AG04449 (cell line): ENCODE measurements at regions of chr19 and their contacts with region 1.

Region 1: GRCh38 chr19:39341719-39342604 is at the start of gene SAMD4B:
- DNase-seq: peak; percentile 72
- H3K4me3 ChIP-seq: peak within 1 kb of the TSS; percentile 90
- CTCF ChIP-seq: peak; percentile 88

Region 2: DNA sequence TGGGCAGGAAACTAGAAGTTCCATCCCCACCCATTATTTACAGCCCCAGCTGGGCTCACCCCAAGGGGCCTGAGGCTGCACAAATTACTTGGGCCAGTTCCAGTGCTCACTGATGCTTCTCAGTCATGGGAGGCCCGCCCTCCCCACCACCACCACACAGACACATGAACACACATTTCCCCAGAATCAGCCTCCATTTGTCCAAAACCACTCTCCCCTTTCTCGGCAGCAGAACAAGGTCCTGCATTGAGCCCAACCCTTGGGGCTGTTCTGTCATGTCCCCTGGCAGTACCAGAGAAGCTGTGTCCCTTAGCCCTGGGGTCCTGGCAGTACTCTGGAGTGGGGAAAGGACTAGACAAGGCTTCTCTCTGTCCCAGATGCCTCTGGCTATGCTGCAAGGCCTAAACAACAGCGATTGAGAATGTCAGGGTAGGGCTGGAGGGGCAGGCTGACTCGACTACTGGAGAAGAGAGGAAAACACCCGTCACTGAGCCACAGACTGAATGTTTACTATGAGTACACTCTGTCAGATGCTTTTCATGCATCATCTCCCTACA is 22.0 kb after region 1 on chr19:
- CTCF ChIA-PET with region 1: interaction called, 10 read pairs
- POLR2A ChIA-PET with region 1: interaction called, 4 read pairs
- DNase-seq: no peak
- H3K4me3 ChIP-seq: no peak overlapping the region
- CTCF ChIP-seq: no peak

Region 3: DNA sequence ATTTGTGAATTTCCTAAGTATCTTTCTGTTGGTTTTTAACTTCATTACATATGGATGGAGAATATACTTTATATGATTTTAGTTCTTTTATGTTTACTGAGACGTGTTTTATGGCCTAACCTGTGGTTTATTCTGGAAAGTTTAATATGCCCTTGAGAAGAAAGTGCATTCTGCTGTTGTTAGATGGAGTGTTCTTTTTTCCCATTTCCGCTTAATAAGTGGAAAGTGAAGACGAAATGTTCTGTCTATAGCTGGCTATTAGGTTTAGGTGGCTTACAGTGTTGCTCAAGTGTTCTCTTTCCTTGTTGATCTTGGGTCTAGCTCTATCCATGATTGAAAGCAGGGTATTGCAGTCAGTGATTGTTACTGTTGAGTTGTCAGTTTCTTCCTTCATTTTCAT is 121.4 kb after region 1 on chr19:
- CTCF ChIA-PET with region 1: no interaction called
- POLR2A ChIA-PET with region 1: no interaction called
- DNase-seq: no peak
- H3K4me3 ChIP-seq: no peak overlapping the region
- CTCF ChIP-seq: no peak